ENCODE measurements at regions of chr1 and their contacts with region 1.

Region 1: DNA sequence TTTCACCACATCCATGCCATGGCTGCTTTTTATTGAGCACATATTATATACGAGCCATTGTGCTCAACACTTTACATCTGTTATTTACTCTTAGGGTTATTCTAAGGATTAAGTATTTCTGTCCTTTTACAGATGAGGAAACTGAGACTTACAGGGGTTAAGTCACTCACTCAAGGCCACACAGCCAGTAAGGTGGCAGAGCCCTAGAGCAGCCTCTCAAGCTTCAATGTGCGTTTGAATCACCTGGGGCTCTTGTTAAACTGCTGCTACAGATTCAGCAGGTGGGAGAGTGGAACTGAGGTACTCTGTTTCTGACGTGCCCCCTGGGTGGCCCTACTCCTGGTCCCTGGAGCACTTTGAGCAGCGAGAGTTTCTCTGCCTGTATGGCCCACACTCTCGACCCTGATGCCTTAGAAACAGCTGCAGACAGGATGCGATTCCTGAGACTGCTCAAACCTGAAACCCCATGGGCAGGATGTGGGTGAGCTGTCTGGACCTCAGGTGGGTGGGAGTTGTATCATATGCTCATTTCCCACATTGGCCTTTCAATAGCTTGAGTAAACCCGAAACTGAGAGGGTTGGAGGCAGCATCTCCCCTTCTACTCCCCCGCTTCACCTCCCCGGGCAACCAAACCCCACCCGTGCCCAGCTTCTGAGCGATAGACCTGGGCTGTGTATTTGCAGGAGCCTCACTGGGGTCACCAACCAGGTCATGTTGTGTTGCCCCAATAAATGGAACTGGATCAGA is 59.3 kb downstream of the MAN1C1 start:
- DNase-seq: peak; percentile 97
- H3K4me3 Mint-ChIP-seq: peak overlapping the region; percentile 68
- H3K27ac Mint-ChIP-seq: peak overlapping the region; percentile 79
- H3K4me1 Mint-ChIP-seq: peaks cover 85% of the 10 kb centered on the region
- H3K27me3 Mint-ChIP-seq: no peaks in the 10 kb centered on the region

Region 2: DNA sequence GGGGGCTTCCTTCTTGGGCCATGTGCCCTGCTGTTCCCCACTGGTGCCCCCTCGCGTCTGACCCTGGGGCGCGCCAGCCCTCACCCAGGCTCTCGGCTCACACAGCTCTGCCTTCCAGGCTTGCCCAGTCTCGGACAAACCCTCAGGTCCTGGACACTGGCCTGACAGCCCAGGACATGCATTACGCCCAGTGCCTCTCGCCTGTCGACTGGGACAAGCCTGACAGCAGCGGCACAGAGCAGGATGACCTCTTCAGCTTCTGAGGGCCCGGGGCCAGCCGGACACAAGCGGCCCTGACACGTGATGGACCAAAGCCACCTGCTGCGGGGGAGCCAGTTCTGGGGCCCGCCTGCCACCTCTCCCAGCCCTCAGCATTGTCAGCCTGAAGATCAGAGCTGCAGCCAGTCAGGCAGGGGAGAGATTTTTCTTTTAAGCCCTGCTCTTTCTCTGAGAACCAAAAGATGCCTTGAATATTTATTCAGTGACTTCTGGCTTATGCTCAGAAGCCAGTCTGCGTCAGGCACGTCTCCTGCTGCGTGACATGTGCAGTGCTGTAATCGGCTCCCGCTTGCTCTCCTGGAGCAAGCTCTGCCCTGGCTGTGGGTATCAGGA is 109.1 kb before region 1 on chr1:
- CTCF ChIA-PET with region 1: no interaction called
- intact Hi-C with region 1: loop called (anchors 5 kb)
- DNase-seq: peak; percentile 54
- H3K4me3 Mint-ChIP-seq: no peak overlapping the region
- H3K27ac Mint-ChIP-seq: peak overlapping the region; percentile 83
- H3K4me1 Mint-ChIP-seq: peaks cover 81% of the 10 kb centered on the region
- H3K27me3 Mint-ChIP-seq: no peaks in the 10 kb centered on the region

Region 3: DNA sequence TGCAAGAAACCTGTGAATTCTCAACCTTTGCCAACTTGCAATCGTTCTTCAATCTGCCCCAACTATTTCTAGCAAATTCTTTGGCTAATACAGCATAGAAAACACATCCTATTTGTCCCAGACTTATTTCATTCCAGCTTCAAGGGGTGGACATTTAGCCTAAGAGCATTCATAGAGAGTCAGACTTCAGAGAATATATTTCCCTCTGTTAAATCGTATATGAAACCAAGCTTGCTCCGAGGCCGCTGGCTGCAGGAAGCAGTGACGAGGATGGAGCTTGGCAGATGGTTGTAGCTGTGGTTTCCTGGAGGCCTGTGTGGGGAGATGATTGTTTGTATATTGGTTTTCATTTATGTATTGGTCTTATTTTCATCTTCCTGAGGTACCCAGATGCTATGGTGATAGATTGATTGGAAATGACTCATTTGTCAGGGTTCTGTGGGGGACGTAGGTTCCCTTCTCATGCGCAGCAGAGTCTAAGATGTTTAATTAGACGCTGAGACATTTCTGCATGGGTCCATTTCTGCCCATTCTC is 33.3 kb before region 1 on chr1:
- CTCF ChIA-PET with region 1: interaction called, 6 read pairs
- intact Hi-C with region 1: loop called (anchors 1 kb)
- DNase-seq: peak; percentile 86
- H3K4me3 Mint-ChIP-seq: peak overlapping the region; percentile 68
- H3K27ac Mint-ChIP-seq: peak overlapping the region; percentile 77
- H3K4me1 Mint-ChIP-seq: peaks cover 76% of the 10 kb centered on the region
- H3K27me3 Mint-ChIP-seq: no peaks in the 10 kb centered on the region

Region 4: GRCh38 chr1:25695090-25695770 is 19.3 kb after region 1 on chr1:
- CTCF ChIA-PET with region 1: interaction called, 11 read pairs
- intact Hi-C with region 1: no loop called
- DNase-seq: no peak
- H3K4me3 Mint-ChIP-seq: peak overlapping the region; percentile 50
- H3K27ac Mint-ChIP-seq: peak overlapping the region; percentile 59
- H3K4me1 Mint-ChIP-seq: peaks cover 50% of the 10 kb centered on the region
- H3K27me3 Mint-ChIP-seq: no peaks in the 10 kb centered on the region

Region 5: GRCh38 chr1:25774921-25775801 is 99.3 kb after region 1 on chr1:
- CTCF ChIA-PET with region 1: interaction called, 6 read pairs
- intact Hi-C with region 1: loop called (anchors 1 kb)
- DNase-seq: peak; percentile 97
- H3K4me3 Mint-ChIP-seq: peak overlapping the region; percentile 65
- H3K27ac Mint-ChIP-seq: peak overlapping the region; percentile 84
- H3K4me1 Mint-ChIP-seq: peaks cover 70% of the 10 kb centered on the region
- H3K27me3 Mint-ChIP-seq: no peaks in the 10 kb centered on the region